Tibial artery (tissue), 4 donors: ENCODE measurements at regions of chr2 and their contacts with region 1.

Region 1: GRCh38 chr2:12807907-12808810 is 91.4 kb downstream of the TRIB2 start:
- DNase-seq: no peak
- H3K4me3 ChIP-seq: no peak overlapping the region
- H3K27ac ChIP-seq: peak overlapping the region in 1 of 2 donors; percentile 8
- H3K4me1 ChIP-seq: no peaks in the 10 kb centered on the region
- H3K27me3 ChIP-seq: no peaks in the 10 kb centered on the region
- CTCF ChIP-seq: no peak

Region 2: DNA sequence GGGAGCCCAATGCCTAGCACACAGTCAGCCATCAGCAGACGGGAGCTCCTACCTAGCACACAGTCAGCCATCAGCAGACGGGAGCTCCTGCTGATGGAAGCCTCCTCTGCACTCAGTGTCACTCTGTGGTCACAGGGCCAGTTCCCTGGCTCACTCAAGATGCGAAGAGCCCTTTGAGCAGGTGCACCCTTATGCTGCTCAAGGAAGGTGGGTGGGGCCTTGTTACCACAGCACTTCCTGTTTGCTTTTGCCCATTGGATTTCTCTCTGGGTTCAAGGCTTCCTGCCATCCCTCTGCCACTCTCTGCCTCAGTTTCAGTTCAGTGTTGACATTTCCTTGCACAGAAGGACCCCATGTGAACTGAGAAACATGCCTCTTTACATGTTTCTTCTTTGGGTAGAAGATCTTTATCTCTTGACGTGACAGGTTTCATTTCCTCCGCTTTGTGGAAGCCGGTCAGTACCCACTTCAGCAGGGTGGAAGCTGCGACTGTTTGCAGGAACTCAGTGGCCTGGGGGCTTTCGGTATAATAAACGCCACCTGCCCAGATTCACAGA is 79.9 kb before region 1 on chr2:
- intact Hi-C with region 1: loop called (anchors 10 kb)
- DNase-seq: no peak
- H3K4me3 ChIP-seq: no peak overlapping the region
- H3K27ac ChIP-seq: no peak overlapping the region
- H3K4me1 ChIP-seq: peaks cover 0 to 53% (median 32%) of the 10 kb centered on the region in 4 donors
- H3K27me3 ChIP-seq: no peaks in the 10 kb centered on the region
- CTCF ChIP-seq: no peak

Region 3: GRCh38 chr2:12884713-12885282 is 76.6 kb after region 1 on chr2:
- intact Hi-C with region 1: no loop called
- DNase-seq: peak; percentile 71 to 78
- H3K4me3 ChIP-seq: no peak overlapping the region
- H3K27ac ChIP-seq: no peak overlapping the region
- H3K4me1 ChIP-seq: peaks cover 0 to 17% (median 8%) of the 10 kb centered on the region in 4 donors
- H3K27me3 ChIP-seq: no peaks in the 10 kb centered on the region
- CTCF ChIP-seq: no peak